ENCODE measurements at regions of chr17 and their contacts with region 1.

Region 1: DNA sequence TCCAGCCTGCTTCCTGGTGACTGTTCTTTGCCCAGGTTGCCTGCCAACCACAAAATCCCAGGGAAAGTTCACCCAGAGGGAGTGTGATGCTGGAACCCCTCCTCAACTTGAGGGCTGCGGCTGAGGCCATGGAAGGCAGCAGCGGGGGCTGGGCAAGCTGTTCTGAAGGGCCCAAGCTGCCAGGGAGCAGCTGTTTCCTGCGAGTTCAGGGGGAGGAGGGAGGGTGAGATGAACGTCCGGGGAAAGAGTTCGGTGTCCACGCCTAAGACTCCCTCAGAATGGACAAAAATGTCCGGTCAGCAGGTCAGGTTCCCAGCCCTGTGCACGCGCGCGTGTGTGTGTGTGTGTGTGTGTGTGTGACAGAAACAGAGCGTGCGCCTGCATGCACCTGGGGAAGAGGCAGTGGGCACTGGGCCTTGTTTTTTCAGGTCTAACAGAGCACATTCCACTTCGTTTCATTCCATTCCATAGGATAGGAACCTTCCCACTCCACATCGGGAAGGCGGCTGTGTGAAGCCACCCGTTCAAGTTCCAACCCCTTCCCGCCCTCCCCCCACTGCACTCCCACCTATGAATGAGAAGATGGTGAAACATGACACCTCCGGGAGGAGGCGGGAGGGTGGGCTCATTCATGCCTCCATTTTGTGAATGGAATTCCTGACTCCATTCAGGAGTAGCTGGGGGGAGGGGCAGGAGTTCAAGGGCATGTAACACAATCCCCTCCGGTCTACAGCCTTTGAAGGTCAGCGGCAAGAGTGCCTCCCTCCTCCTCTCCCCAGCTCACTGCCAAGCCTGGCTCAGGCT is 15.7 kb downstream of the ETV4 start:
- DNase-seq: peak; percentile 93 to 99
- H3K4me3 ChIP-seq: peak overlapping the region; percentile 17 to 59 (median 40); a peak in 7 of 8 replicates
- H3K27ac ChIP-seq: peak overlapping the region; percentile 89
- H3K4me1 ChIP-seq: peaks cover 18 to 40% (median 22%) of the 10 kb centered on the region in 4 experiments
- H3K27me3 ChIP-seq: no peaks in the 10 kb centered on the region
- CTCF ChIP-seq: 0 out of 4 replicates have a peak, but pooled peaks of 1 of the 3 experiments have one; percentile 6
- EP300 ChIP-seq: peak in 1 of 2 experiments; percentile 94; a peak in 2 of 3 replicates
- POLR2A ChIP-seq: peak in 1 of 2 experiments; percentile 81; a peak in 2 of 3 replicates
- RAD21 ChIP-seq: peak; percentile 8 to 10; a peak in 1 of 4 replicates

Region 2: GRCh38 chr17:43556292-43556691 is 25.8 kb after region 1 on chr17:
- CTCF ChIA-PET with region 1: interaction called, 4 read pairs
- POLR2A ChIA-PET with region 1: interaction called, 11 read pairs
- DNase-seq: no peak
- H3K4me3 ChIP-seq: no peak overlapping the region
- H3K27ac ChIP-seq: no peak overlapping the region
- H3K4me1 ChIP-seq: peaks cover 5 to 20% (median 13%) of the 10 kb centered on the region in 4 experiments
- H3K27me3 ChIP-seq: no peaks in the 10 kb centered on the region; a peak in 2 of 7 replicates
- CTCF ChIP-seq: no peak
- EP300 ChIP-seq: no peak
- POLR2A ChIP-seq: no peak
- RAD21 ChIP-seq: no peak

Region 3: GRCh38 chr17:43562679-43563599 is 32.5 kb after region 1 on chr17:
- CTCF ChIA-PET with region 1: interaction called, 5 read pairs
- POLR2A ChIA-PET with region 1: interaction called, 11 read pairs
- DNase-seq: no peak
- H3K4me3 ChIP-seq: peak overlapping the region in 2 of 4 experiments; percentile 14 to 43; a peak in 3 of 8 replicates
- H3K27ac ChIP-seq: no peak overlapping the region
- H3K4me1 ChIP-seq: peaks cover 13 to 24% (median 20%) of the 10 kb centered on the region in 4 experiments
- H3K27me3 ChIP-seq: peaks cover 0 to 3% (median 1%) of the 10 kb centered on the region in 4 experiments; a peak in 3 of 7 replicates
- CTCF ChIP-seq: no peak
- EP300 ChIP-seq: no peak
- POLR2A ChIP-seq: no peak
- RAD21 ChIP-seq: no peak